HepG2 (cell line): ENCODE measurements at regions of chr5 and their contacts with region 1.

Region 1: GRCh38 chr5:93789173-93790070 is 48.0 kb upstream of the POU5F2 start:
- DNase-seq: no peak
- ATAC-seq: no peak
- H3K4me3 ChIP-seq: no peak overlapping the region
- H3K27ac ChIP-seq: no peak overlapping the region
- H3K4me1 ChIP-seq: peaks cover 19% of the 10 kb centered on the region
- H3K27me3 ChIP-seq: no peaks in the 10 kb centered on the region
- CTCF ChIP-seq: no peak
- EP300 ChIP-seq: no peak
- POLR2A ChIP-seq: no peak
- RAD21 ChIP-seq: no peak

Region 2: DNA sequence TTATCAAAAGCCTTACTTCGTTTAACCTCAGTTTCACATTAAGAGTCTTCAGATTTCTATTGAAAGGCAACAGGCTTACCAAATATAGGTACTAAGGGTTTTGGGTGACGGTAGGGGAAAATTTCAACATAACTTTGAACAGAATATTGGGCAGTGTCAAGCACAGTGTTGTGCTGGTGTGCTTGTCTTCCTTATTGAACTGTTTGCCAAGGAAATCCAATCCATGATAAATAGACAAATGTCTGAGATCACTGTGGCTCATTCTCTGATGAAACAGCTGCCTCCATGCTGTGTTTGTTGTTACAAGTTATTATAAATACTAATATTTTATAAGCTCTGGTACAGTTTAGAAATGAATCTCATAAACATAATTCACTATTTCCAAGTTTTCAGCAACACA is 938.5 kb before region 1 on chr5:
- CTCF ChIA-PET with region 1: no interaction called
- POLR2A ChIA-PET with region 1: no interaction called
- in situ Hi-C with region 1: loop called (anchors 25 kb)
- intact Hi-C with region 1: no loop called
- DNase-seq: no peak
- ATAC-seq: no peak
- H3K4me3 ChIP-seq: no peak overlapping the region
- H3K27ac ChIP-seq: no peak overlapping the region
- H3K4me1 ChIP-seq: no peaks in the 10 kb centered on the region
- H3K27me3 ChIP-seq: no peaks in the 10 kb centered on the region
- CTCF ChIP-seq: no peak
- EP300 ChIP-seq: no peak
- POLR2A ChIP-seq: no peak
- RAD21 ChIP-seq: no peak

Region 3: DNA sequence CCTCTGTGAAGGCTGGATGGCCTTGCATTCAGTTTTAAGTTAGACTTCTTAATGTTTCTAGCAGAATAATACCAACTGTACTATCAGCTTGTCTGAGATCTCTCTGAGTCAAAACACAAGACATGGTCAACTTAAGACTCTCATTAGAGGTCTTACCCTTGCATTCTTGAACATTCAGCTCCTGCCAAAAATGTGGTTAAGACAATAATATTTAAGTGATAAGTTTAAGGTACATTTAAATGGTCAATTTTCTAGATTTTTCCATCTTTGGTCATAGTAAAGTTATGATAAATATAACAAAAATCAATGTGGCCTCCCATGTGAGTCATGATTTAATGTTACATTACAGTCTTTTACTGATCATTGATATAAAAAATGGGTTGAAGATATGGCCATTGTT is 131.4 kb before region 1 on chr5:
- CTCF ChIA-PET with region 1: no interaction called
- POLR2A ChIA-PET with region 1: no interaction called
- in situ Hi-C with region 1: no loop called
- intact Hi-C with region 1: no loop called
- DNase-seq: no peak
- ATAC-seq: no peak
- H3K4me3 ChIP-seq: no peak overlapping the region
- H3K27ac ChIP-seq: no peak overlapping the region
- H3K4me1 ChIP-seq: no peaks in the 10 kb centered on the region
- H3K27me3 ChIP-seq: no peaks in the 10 kb centered on the region
- CTCF ChIP-seq: no peak
- EP300 ChIP-seq: no peak
- POLR2A ChIP-seq: no peak
- RAD21 ChIP-seq: no peak